Right ventricle myocardium inferior (tissue), 1 donor: ENCODE measurements at regions of chr2 and their contacts with region 1.

Region 1: DNA sequence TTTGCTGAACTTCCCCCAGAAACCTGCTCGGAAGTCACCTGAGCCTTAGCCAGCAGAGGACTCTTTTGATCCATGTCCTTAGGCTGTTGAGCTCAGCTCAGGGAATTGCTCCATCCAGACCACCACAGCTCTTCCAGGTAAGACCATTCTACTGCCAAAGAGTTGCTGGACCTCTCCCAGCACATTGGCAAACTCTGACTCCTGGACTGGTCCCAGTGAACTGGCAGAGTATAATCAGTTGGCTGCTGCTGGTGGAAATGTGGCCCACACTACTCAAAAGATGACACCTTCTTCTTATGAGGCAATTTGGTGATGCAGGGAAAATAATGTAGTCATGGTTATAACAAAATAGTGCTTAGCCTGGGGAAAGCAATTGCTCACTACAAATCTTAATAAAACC is 308.8 kb upstream of the FIGN start:
- DNase-seq: no peak
- ATAC-seq: peak; percentile 93

Region 2: GRCh38 chr2:163471947-163472346 is 572.7 kb before region 1 on chr2:
- intact Hi-C with region 1: loop called (anchors 5 kb)
- DNase-seq: no peak
- ATAC-seq: peak; percentile 62